ENCODE measurements at regions of chr3 and their contacts with region 1.

Region 1: DNA sequence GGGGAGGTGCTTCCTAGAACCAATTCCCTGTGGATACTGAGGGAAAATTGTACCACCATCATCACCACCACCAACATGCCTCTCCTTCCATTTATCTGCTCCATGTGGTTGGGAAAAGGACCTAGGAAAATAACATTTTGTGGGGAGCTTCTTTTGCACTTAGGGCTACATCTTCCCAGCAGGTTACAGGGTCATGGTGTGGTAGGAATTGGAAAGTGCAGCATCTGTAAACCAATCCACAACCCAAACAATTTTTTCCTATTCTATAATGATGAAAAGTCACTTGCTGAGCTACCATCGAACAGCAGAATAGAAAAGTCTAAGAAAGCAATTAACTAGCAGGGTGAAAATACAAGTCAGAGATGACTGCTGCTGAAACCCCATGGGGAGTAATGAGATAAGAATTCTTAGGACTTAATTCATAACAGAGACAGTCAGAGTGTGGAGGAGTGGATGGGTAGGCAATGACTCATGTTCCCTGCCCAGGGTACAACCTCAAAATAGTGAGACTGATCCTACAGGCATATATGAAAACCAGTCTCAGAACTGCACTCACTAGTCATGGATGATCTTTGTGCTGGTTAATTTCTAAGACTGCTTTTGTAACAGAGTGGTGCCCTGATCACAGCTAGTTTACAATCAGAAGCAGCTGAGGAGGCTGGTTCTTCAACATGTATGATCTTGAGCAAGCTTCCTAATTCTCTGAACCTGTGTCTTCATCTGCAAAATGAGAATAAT is 38.1 kb upstream of the LEKR1 start:
- DNase-seq: peak; percentile 94
- ATAC-seq: peak; percentile 73
- H3K4me3 ChIP-seq: peak overlapping the region; percentile 28; the same call in 1 of the 2 replicates
- H3K27ac ChIP-seq: peak overlapping the region; percentile 91
- H3K4me1 ChIP-seq: peaks cover 59% of the 10 kb centered on the region
- H3K27me3 ChIP-seq: no peaks in the 10 kb centered on the region
- CTCF ChIP-seq: no peak

Region 2: DNA sequence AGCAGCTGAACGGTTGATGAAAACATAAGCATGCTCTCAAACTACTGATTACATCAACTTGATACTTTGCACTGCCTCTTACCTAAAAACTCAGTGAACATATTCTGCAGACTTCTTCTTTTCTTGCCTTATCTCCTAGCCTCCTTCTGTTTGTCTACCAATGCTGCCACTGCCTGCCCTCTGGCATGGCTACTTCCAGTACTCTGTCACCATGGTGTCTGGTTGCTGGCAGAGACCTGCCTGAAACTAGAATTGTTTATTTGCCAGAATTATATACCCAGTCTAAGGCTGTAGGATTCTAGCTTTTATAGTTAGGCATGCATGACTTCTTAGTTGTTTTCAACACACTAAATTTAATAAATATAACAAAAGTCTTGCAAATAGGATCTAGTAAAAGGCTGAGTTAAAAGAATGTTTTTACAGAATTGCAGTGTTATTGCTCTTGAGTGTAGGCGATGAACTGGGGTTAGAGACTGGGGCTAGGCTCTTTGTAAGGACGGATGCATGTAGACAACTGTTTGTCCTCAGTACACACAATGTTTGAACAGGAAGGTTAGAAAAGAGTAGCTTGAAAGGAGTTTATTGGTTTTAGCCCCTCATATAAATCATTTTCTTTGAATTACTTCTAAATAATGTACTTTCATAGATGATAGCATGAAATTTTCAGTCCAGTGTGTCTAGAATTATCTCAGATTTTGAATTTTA is 551.4 kb before region 1 on chr3:
- CTCF ChIA-PET with region 1: no interaction called
- POLR2A ChIA-PET with region 1: no interaction called
- intact Hi-C with region 1: no loop called
- DNase-seq: no peak
- ATAC-seq: no peak
- H3K4me3 ChIP-seq: no peak overlapping the region
- H3K27ac ChIP-seq: no peak overlapping the region
- H3K4me1 ChIP-seq: no peaks in the 10 kb centered on the region
- H3K27me3 ChIP-seq: peaks cover 47% of the 10 kb centered on the region
- CTCF ChIP-seq: no peak

Region 3: DNA sequence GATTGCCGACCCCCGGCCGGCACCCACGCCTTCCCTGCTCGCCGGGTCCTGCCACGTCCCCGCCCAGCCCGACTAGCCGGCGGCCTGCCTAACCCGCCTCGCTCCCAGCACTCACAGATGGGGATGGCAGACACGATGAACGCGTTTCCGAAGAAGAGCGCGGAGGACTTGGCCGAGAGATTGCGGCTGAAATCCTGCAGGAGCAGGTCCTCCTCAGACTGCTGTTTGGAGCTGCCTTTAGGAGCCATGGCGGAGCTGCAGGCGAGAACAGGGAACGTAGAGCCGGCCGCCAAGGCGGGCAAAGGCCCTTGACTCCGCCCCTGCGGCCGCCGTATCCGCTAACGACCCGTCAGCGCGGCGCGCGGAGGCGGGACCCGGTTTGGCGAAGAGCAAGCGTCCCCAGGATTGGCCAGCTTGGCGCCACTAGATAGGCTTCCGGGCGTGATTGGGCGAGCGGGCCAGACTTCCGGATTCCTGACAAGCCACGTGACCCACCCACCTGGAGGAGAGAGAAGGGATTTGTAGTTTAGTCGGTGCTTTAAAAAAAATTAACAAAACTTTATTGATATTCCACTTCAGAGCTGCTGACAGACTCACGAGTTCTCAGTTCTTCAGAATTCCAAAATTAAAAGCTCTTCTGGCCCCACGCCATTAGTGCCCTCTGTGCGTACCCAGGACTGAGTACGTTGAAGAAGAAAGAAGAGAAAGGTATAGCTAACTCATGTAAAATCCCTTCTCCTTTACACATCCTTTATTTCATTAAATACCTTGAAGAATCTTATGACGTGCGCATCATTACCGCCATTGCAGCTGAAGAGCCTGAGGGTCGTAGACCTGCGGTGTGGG is 233.0 kb before region 1 on chr3 and contains the start of gene SSR3:
- CTCF ChIA-PET with region 1: no interaction called
- POLR2A ChIA-PET with region 1: no interaction called
- intact Hi-C with region 1: loop called (anchors 10 kb)
- DNase-seq: peak; percentile 99
- ATAC-seq: peak; percentile 99
- H3K4me3 ChIP-seq: peak within 1 kb of the TSS; percentile 96
- H3K27ac ChIP-seq: peak within 1 kb of the TSS; percentile 54
- H3K4me1 ChIP-seq: peaks cover 36% of the 10 kb centered on the region
- H3K27me3 ChIP-seq: no peaks in the 10 kb centered on the region
- CTCF ChIP-seq: no peak
- total RNA-seq, gene SSR3: 171 and 178 TPM in 2 replicates

Region 4: GRCh38 chr3:156691920-156692319 is 96.2 kb before region 1 on chr3:
- CTCF ChIA-PET with region 1: no interaction called
- POLR2A ChIA-PET with region 1: no interaction called
- intact Hi-C with region 1: loop called (anchors 1 kb)
- DNase-seq: peak; percentile 67
- ATAC-seq: peak; percentile 40
- H3K4me3 ChIP-seq: peak overlapping the region; percentile 1; the same call in 1 of the 2 replicates
- H3K27ac ChIP-seq: peak overlapping the region; percentile 61
- H3K4me1 ChIP-seq: peaks cover 61% of the 10 kb centered on the region
- H3K27me3 ChIP-seq: no peaks in the 10 kb centered on the region
- CTCF ChIP-seq: no peak

Region 5: DNA sequence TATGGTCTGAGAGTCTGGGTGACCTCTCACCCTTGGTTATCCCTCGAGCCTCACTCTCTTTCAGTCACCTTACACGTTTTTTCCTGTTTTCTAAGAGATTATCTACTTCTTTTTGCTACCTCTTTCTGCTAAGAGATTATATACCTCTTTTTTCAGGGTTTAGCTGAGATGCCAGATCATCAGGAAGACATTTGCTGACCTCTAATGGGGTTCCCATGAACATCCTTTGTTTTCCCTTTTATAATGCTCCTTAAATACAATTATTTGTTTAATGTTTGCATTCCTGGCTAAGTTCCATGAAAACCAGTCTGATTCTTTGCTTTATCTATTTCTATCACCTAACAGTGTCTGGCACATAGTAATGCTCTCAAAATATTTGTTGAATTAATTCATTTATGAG is 77.6 kb after region 1 on chr3:
- CTCF ChIA-PET with region 1: no interaction called
- POLR2A ChIA-PET with region 1: no interaction called
- intact Hi-C with region 1: loop called (anchors 1 kb)
- DNase-seq: peak; percentile 32
- ATAC-seq: peak; percentile 25
- H3K4me3 ChIP-seq: no peak overlapping the region
- H3K27ac ChIP-seq: peak overlapping the region; percentile 29
- H3K4me1 ChIP-seq: peaks cover 38% of the 10 kb centered on the region
- H3K27me3 ChIP-seq: no peaks in the 10 kb centered on the region
- CTCF ChIP-seq: 0 out of 2 replicates have a peak, but pooled peaks have one; percentile 12

Region 6: GRCh38 chr3:156892701-156893100 is 104.6 kb after region 1 on chr3:
- CTCF ChIA-PET with region 1: no interaction called
- POLR2A ChIA-PET with region 1: no interaction called
- intact Hi-C with region 1: no loop called
- DNase-seq: peak; percentile 97
- ATAC-seq: peak; percentile 94
- H3K4me3 ChIP-seq: no peak overlapping the region
- H3K27ac ChIP-seq: peak overlapping the region; percentile 88
- H3K4me1 ChIP-seq: peaks cover 22% of the 10 kb centered on the region
- H3K27me3 ChIP-seq: no peaks in the 10 kb centered on the region
- CTCF ChIP-seq: no peak

Region 7: GRCh38 chr3:157130467-157131251 is 342.6 kb after region 1 on chr3:
- CTCF ChIA-PET with region 1: no interaction called
- POLR2A ChIA-PET with region 1: no interaction called
- intact Hi-C with region 1: loop called (anchors 2 kb)
- DNase-seq: peak; percentile 95
- ATAC-seq: peak; percentile 49
- H3K4me3 ChIP-seq: peak overlapping the region; percentile 33; the same call in 1 of the 2 replicates
- H3K27ac ChIP-seq: peak overlapping the region; percentile 99
- H3K4me1 ChIP-seq: peaks cover 98% of the 10 kb centered on the region
- H3K27me3 ChIP-seq: no peaks in the 10 kb centered on the region
- CTCF ChIP-seq: peak; percentile 76

Measured in PC-3 (cell line).